ENCODE measurements at regions of chr15 and their contacts with region 1.

Region 1: GRCh38 chr15:43776718-43777583 is at the start of gene ELL3:
- DNase-seq: peak; percentile 82 to 92 (median 92)
- H3K4me3 ChIP-seq: peak within 1 kb of the TSS; percentile 76 to 94 (median 83)
- H3K27ac ChIP-seq: peak within 1 kb of the TSS in 1 of 2 experiments; percentile 54
- H3K4me1 ChIP-seq: peaks cover 0 to 19% (median 10%) of the 10 kb centered on the region in 4 experiments
- H3K27me3 ChIP-seq: no peaks in the 10 kb centered on the region

Region 2: GRCh38 chr15:43763819-43764446 is 13.0 kb before region 1 on chr15:
- CTCF ChIA-PET with region 1: interaction called, 13 read pairs
- POLR2A ChIA-PET with region 1: interaction called, 10 read pairs
- DNase-seq: no peak
- H3K4me3 ChIP-seq: no peak overlapping the region
- H3K27ac ChIP-seq: no peak overlapping the region
- H3K4me1 ChIP-seq: no peaks in the 10 kb centered on the region
- H3K27me3 ChIP-seq: no peaks in the 10 kb centered on the region

Region 3: DNA sequence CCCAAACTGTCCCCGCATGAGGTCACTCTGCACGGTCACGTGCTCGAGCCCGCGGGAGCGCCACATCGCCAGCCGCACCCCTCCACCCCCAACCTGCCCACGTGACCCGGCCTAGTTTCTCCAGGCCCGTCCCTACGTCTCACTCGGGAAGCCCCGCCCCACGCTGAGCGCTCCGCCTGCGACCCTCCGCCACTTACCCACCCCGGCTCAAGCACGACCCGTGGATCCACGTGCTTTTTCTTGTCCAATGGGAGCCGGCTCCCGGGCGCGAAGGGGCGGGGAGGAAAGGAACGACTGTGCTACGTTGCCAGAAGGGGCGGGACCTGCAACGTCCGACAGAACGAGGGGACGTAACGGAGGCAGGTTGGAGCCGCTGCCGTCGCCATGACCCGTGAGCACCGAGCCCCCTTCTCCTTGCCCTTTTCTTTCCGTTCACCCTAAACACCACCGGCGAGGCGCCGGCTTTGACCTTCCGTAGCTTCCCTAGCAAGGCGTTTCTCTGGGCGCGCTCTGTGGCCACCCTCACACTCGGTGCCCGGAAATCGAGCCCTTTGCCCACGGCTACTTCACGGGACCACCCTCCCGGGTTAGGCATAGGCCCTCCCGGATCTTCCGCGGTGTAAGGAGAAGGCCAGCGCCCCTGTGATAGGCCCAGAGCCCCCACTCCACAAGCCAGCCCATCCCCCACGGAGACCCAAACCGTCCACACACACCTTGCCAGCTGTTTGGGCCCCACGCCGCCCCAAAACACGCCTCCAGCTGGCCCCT is 15.2 kb after region 1 on chr15 and contains the start of gene SERF2:
- CTCF ChIA-PET with region 1: interaction called, 37 read pairs
- POLR2A ChIA-PET with region 1: interaction called, 5 read pairs
- DNase-seq: peak; percentile 100
- H3K4me3 ChIP-seq: peak within 1 kb of the TSS; percentile 78 to 100 (median 98)
- H3K27ac ChIP-seq: peak within 1 kb of the TSS; percentile 97 to 99
- H3K4me1 ChIP-seq: peaks cover 3 to 26% (median 13%) of the 10 kb centered on the region in 4 experiments
- H3K27me3 ChIP-seq: no peaks in the 10 kb centered on the region

Region 4: DNA sequence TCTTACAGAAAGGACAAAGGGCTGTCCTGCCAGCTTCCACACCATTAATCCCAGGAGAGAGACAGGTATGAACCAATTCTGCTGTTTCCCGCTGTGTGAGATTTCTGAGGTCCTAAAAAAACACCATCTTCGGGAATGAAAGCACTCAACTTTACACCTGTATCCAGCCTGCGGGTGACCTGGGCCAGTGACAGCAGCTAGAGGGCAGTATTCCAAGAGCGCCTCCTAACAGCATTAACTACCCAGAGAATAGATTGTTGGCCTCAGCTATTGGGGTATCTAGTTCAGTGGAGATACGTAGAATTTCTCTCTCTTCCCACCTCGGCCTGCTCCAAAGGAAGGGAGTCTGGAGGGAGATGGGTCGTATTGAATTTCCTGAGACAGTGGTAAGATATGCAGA is 105.0 kb after region 1 on chr15:
- CTCF ChIA-PET with region 1: no interaction called
- POLR2A ChIA-PET with region 1: no interaction called
- DNase-seq: peak in 2 of 3 donors; percentile 4 to 13
- H3K4me3 ChIP-seq: no peak overlapping the region
- H3K27ac ChIP-seq: no peak overlapping the region
- H3K4me1 ChIP-seq: no peaks in the 10 kb centered on the region
- H3K27me3 ChIP-seq: no peaks in the 10 kb centered on the region

Measured in common myeloid progenitor, CD34-positive (primary cell).